ENCODE measurements at regions of chr13 and their contacts with region 1.

Region 1: DNA sequence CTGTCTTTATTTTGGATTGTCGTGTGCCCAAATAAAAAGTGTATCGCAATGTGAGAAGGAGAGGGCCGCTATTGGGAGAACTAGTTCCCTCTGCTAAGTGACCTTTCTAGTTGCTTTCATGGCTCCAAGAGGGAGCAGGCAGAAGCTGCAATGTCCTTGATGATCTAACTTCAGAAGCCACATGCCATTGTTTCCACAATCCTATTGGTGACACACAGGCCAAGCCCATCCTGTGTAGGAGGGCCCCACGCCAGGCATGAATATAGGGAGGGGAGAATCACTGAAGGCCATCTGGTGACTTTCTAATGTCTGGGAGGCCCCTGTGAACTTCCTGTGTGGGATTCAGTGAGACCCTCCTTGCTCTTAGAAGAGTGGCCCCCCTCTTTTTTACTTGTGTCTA is 47.8 kb upstream of the KPNA3 start:
- DNase-seq: no peak
- H3K4me3 ChIP-seq: no peak overlapping the region
- H3K27ac ChIP-seq: peak overlapping the region in 1 of 8 donors; percentile 42
- H3K4me1 ChIP-seq: no peaks in the 10 kb centered on the region
- H3K27me3 ChIP-seq: no peaks in the 10 kb centered on the region
- CTCF ChIP-seq: no peak
- POLR2A ChIP-seq: no peak

Region 2: DNA sequence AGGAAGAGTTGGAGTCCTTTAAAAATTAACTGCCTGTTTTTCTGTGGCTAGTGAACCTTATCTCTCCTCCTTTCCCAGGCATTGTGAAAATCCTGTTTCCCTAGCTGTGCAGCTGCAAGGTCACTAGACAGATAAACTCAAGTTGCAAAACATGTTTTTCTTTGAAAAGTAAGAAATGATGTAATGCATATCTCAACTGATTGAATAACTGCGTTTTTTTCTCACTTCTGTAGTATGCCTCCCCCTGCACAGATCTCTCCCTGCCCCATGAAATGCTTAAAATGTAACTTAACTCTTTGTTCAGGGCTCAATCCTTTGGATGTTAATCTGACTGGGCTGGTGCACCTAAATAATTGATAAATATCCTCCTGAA is 1214.2 kb before region 1 on chr13:
- intact Hi-C with region 1: no loop called
- DNase-seq: no peak
- H3K4me3 ChIP-seq: no peak overlapping the region
- H3K27ac ChIP-seq: peak overlapping the region in 7 of 8 donors; percentile 37 to 75 (median 66)
- H3K4me1 ChIP-seq: peaks cover 0 to 19% (median 14%) of the 10 kb centered on the region in 6 donors
- H3K27me3 ChIP-seq: no peaks in the 10 kb centered on the region
- CTCF ChIP-seq: no peak
- POLR2A ChIP-seq: no peak

Region 3: GRCh38 chr13:49669735-49670309 is 170.4 kb before region 1 on chr13:
- intact Hi-C with region 1: loop called (anchors 5 kb)
- DNase-seq: no peak
- H3K4me3 ChIP-seq: no peak overlapping the region
- H3K27ac ChIP-seq: no peak overlapping the region
- H3K4me1 ChIP-seq: peaks cover 0 to 15% (median 0%) of the 10 kb centered on the region in 6 donors
- H3K27me3 ChIP-seq: no peaks in the 10 kb centered on the region
- CTCF ChIP-seq: peak in 9 of 11 experiments; percentile 17 to 71 (median 32)
- POLR2A ChIP-seq: no peak